ENCODE measurements at regions of chr7 and their contacts with region 1.

Region 1: GRCh38 chr7:100208911-100209408 is 10.8 kb upstream of the PVRIG start:
- DNase-seq: peak in 3 of 5 donors; percentile 16 to 37 (median 20)
- H3K4me3 ChIP-seq: no peak overlapping the region
- H3K4me3 Mint-ChIP-seq: peak overlapping the region; percentile 58 to 80 (median 75)
- H3K27ac ChIP-seq: no peak overlapping the region
- H3K27ac Mint-ChIP-seq: peak overlapping the region; percentile 66 to 91 (median 84)
- H3K4me1 ChIP-seq: peaks cover 37% of the 10 kb centered on the region
- H3K4me1 Mint-ChIP-seq: peaks cover 32 to 43% (median 36%) of the 10 kb centered on the region in 4 donors
- H3K27me3 ChIP-seq: no peaks in the 10 kb centered on the region
- H3K27me3 Mint-ChIP-seq: no peaks in the 10 kb centered on the region

Region 2: DNA sequence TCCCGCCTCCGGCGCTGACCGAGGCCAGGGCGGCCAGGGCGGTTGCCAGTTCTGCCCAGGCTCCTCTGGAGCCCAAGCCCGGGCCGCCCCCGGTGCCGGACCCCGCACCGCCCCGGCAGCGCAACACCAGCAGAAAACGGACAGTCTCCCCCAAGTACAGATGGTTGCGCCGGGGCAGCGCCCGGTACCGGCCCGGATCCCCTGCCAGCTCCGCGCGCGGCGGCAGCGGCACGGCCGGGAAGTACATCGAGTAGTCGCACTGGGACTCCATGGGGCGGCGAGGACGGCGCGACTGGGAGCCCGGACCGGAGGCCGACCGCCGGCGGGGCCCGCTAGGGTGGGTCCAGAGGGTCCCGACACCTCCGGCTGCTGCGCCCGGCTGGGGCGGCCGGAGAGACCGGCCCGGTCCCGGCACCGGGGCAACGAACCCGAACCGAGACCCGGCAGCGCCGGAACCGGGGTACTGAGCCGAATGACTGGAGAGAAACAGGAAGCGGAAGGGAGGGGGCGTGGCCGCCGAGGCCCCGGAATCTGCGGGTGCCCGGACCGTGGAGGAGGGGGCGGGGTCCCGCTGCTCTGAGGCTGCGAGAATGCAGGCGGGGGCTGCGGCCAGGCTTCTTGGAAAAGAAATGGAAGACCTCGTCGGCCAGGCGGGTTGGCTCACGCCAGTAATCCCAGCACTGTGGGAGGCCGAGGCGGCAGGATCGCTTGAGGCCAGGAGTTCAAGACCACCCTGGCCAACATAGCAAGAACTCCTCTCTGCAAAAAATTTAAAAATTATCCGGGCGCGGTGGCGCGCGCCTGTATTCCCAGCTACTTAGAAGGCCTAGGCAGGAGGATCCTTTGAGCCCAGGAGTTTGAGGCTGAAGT is 50.5 kb before region 1 on chr7 and contains the start of gene TRAPPC14:
- CTCF ChIA-PET with region 1: interaction called, 3 read pairs
- POLR2A ChIA-PET with region 1: interaction called, 12 read pairs
- intact Hi-C with region 1: no loop called
- DNase-seq: peak; percentile 86 to 93 (median 87)
- H3K4me3 ChIP-seq: peak within 1 kb of the TSS; percentile 52 to 74
- H3K4me3 Mint-ChIP-seq: peak within 1 kb of the TSS; percentile 86 to 90 (median 88)
- H3K27ac ChIP-seq: peak within 1 kb of the TSS; percentile 80
- H3K27ac Mint-ChIP-seq: peak within 1 kb of the TSS; percentile 86 to 96 (median 92)
- H3K4me1 ChIP-seq: peaks cover 49% of the 10 kb centered on the region
- H3K4me1 Mint-ChIP-seq: peaks cover 25 to 79% (median 44%) of the 10 kb centered on the region in 4 donors
- H3K27me3 ChIP-seq: no peaks in the 10 kb centered on the region
- H3K27me3 Mint-ChIP-seq: no peaks in the 10 kb centered on the region
- total RNA-seq, gene TRAPPC14: 68.7 to 73.0 TPM

Region 3: GRCh38 chr7:100171087-100171681 is 37.8 kb before region 1 on chr7:
- CTCF ChIA-PET with region 1: no interaction called
- POLR2A ChIA-PET with region 1: interaction called, 12 read pairs
- intact Hi-C with region 1: loop called (anchors 5 kb)
- DNase-seq: peak in 2 of 5 donors; percentile 32 to 52
- H3K4me3 ChIP-seq: no peak overlapping the region
- H3K4me3 Mint-ChIP-seq: peak overlapping the region; percentile 69 to 87 (median 78)
- H3K27ac ChIP-seq: no peak overlapping the region
- H3K27ac Mint-ChIP-seq: peak overlapping the region in 4 of 7 donors; percentile 7 to 85 (median 64)
- H3K4me1 ChIP-seq: peaks cover 55% of the 10 kb centered on the region
- H3K4me1 Mint-ChIP-seq: peaks cover 39 to 67% (median 50%) of the 10 kb centered on the region in 4 donors
- H3K27me3 ChIP-seq: no peaks in the 10 kb centered on the region
- H3K27me3 Mint-ChIP-seq: peaks cover 2 to 4% of the 10 kb centered on the region in 2 donors

Region 4: GRCh38 chr7:100177045-100178001 is 31.6 kb before region 1 on chr7 and contains the starts of genes GPC2 and STAG3:
- CTCF ChIA-PET with region 1: interaction called, 3 read pairs
- POLR2A ChIA-PET with region 1: interaction called, 5 read pairs
- intact Hi-C with region 1: loop called (anchors 5 kb)
- DNase-seq: peak; percentile 96 to 97 (median 97)
- H3K4me3 ChIP-seq: peak within 1 kb of the TSS; percentile 36 to 41
- H3K4me3 Mint-ChIP-seq: peak within 1 kb of the TSS; percentile 66 to 83 (median 80)
- H3K27ac ChIP-seq: peak within 1 kb of the TSS; percentile 35
- H3K27ac Mint-ChIP-seq: peak within 1 kb of the TSS; percentile 62 to 91 (median 76)
- H3K4me1 ChIP-seq: peaks cover 30% of the 10 kb centered on the region
- H3K4me1 Mint-ChIP-seq: peaks cover 22 to 50% (median 34%) of the 10 kb centered on the region in 4 donors
- H3K27me3 ChIP-seq: no peaks in the 10 kb centered on the region
- H3K27me3 Mint-ChIP-seq: no peaks in the 10 kb centered on the region
- total RNA-seq, gene GPC2: 11.8 to 12.5 TPM
- total RNA-seq, gene STAG3: 6.5 to 7.7 TPM

Region 5: DNA sequence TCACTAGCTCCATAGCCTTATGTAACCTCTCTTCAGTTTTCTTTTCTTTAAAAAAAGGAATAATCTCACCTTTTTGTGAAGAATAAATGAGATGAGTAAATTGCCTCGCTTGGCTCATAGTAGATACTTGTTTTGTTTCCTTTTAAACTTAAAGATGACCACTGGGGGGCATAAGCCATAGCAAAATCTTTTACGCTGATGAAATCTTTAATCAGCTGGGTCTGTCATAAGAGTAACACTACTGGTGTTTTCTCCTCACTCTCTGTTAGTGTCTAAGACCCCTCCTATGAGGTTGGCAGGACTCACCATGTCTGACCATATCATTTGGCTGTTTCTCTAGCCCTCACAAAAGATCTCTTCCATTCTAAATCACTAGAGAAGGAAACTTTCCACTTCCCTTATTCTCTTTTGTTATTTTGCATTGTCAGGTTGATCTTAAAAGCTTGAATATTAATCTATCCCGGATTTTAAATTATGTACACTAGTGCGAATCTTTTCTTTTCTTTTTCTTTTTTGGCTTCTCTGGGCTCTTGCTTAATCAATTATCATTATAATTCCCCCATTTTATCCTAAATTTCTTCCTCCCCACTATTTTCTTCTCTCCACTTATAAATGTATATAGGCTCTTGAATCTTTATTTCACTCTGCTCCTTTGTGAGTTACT is 18.8 kb before region 1 on chr7:
- CTCF ChIA-PET with region 1: interaction called, 10 read pairs
- POLR2A ChIA-PET with region 1: interaction called, 3 read pairs
- intact Hi-C with region 1: no loop called
- DNase-seq: peak in 4 of 5 donors; percentile 48 to 59 (median 57)
- H3K4me3 ChIP-seq: no peak overlapping the region
- H3K4me3 Mint-ChIP-seq: no peak overlapping the region
- H3K27ac ChIP-seq: no peak overlapping the region
- H3K27ac Mint-ChIP-seq: peak overlapping the region in 6 of 7 donors; percentile 0 to 69 (median 30)
- H3K4me1 ChIP-seq: no peaks in the 10 kb centered on the region
- H3K4me1 Mint-ChIP-seq: peaks cover 3 to 6% (median 5%) of the 10 kb centered on the region in 4 donors
- H3K27me3 ChIP-seq: no peaks in the 10 kb centered on the region
- H3K27me3 Mint-ChIP-seq: no peaks in the 10 kb centered on the region